ENCODE measurements at regions of chr13 and their contacts with region 1.

Region 1: GRCh38 chr13:103282571-103283450 is 216.6 kb upstream of the SLC10A2 start:
- DNase-seq: no peak
- ATAC-seq: no peak
- H3K4me3 Mint-ChIP-seq: no peak overlapping the region
- H3K27ac Mint-ChIP-seq: no peak overlapping the region
- H3K4me1 Mint-ChIP-seq: no peaks in the 10 kb centered on the region
- H3K27me3 Mint-ChIP-seq: peaks cover 10% of the 10 kb centered on the region

Region 2: GRCh38 chr13:101989798-101990350 is 1292.9 kb before region 1 on chr13:
- CTCF ChIA-PET with region 1: no interaction called
- POLR2A ChIA-PET with region 1: no interaction called
- intact Hi-C with region 1: loop called in 1 of 2 experiments (anchors 5 kb)
- DNase-seq: no peak
- ATAC-seq: no peak
- H3K4me3 Mint-ChIP-seq: no peak overlapping the region
- H3K27ac Mint-ChIP-seq: no peak overlapping the region
- H3K4me1 Mint-ChIP-seq: no peaks in the 10 kb centered on the region
- H3K27me3 Mint-ChIP-seq: no peaks in the 10 kb centered on the region

Region 3: GRCh38 chr13:103236213-103236612 is 46.6 kb before region 1 on chr13:
- CTCF ChIA-PET with region 1: no interaction called
- POLR2A ChIA-PET with region 1: no interaction called
- intact Hi-C with region 1: no loop called
- DNase-seq: no peak
- ATAC-seq: no peak
- H3K4me3 Mint-ChIP-seq: no peak overlapping the region
- H3K27ac Mint-ChIP-seq: no peak overlapping the region
- H3K4me1 Mint-ChIP-seq: no peaks in the 10 kb centered on the region
- H3K27me3 Mint-ChIP-seq: peaks cover 2% of the 10 kb centered on the region